Astrocyte of the cerebellum (primary cell): ENCODE measurements at regions of chr6 and their contacts with region 1.

Region 1: GRCh38 chr6:132333639-132334520 is 67.4 kb downstream of the MOXD1 start:
- DNase-seq: peak; percentile 15
- H3K4me3 ChIP-seq: no peak overlapping the region
- CTCF ChIP-seq: no peak

Region 2: GRCh38 chr6:131787766-131788712 is 545.8 kb before region 1 on chr6:
- in situ Hi-C with region 1: no loop called
- DNase-seq: no peak
- H3K4me3 ChIP-seq: no peak overlapping the region
- CTCF ChIP-seq: peak; percentile 49

Region 3: DNA sequence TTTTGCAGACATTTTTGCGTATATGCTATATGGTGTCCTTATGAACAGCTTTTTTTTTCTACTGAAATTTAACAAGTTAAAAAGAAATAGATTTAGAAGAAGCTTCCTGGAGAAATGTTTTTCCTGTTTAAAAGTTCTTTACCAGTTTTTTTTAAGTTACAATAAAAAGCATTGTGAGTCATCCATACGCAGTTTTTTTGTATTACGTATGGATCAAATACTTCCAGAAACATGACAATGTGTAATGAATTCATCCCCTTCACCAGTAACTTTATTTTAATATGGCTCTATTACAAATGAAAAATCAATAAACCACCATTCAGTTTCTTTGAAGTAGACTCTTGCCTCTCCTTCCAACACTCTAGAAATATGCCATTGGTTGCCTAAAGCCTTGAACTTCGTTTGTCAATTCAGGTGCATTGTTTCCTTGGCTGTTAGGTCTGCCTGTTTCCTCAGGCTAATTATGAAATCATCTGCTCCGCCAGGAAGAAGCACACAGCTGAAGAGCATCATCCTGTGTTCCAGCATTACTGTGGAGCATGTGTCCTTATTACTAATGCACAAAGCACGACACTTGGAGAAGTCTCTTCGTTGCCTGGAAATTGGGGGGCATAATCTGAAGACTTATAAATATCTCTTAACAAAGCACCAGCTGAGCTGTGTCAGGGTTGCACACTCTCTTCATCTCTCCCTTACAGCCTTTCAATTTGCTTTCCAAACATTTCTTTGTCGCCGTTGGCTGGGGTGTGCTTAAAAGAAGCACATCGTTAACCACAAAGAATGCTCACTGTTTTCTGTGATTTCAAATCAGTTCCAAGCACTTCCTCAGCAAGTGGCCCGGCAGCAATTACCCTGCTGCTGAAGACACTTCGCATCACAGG is 57.8 kb after region 1 on chr6:
- in situ Hi-C with region 1: loop called (anchors 5 kb)
- DNase-seq: peak; percentile 36
- H3K4me3 ChIP-seq: peak overlapping the region; percentile 18
- CTCF ChIP-seq: no peak